Left ventricle myocardium inferior (tissue), 1 donor: ENCODE measurements at regions of chr7 and their contacts with region 1.

Region 1: DNA sequence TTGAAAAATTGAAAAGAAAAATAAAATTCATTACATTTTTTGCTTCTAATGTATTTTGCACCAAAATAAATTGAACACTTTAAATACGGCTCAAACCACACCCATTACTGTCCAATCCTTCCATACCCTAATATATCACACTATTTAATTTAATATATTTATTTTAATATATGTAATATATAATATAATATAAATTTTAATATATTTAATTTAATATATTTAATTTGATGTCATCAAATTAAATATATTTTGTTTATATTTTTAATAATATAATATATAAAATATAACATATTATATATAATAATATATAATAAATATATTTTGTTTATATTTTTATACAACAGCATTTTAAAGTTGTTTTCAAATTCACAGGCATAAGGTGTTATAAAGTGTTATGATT is 15.7 kb upstream of the POU6F2 start:
- DNase-seq: no peak
- H3K4me3 ChIP-seq: no peak overlapping the region
- H3K27ac ChIP-seq: no peak overlapping the region
- H3K4me1 ChIP-seq: no peaks in the 10 kb centered on the region
- H3K27me3 ChIP-seq: peaks cover 1% of the 10 kb centered on the region
- CTCF ChIP-seq: no peak

Region 2: DNA sequence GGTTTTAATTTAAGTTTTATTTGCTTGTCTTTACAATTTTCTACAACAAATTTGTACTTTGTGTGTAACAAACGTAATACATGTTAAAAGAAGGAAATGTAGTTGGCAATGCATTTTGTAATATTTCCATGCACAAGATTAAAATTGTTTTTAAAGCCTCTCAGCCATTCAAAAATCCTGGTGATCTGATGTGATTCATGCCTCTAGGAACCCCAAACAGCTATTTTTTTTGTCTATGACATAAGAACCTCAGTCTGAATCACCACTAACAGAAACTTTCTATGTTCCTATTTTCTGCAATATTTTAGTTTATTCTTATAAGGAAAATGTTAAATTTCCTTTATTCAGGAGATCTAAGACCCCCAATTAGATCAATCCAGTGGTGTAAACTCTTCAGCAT is 421.1 kb after region 1 on chr7:
- intact Hi-C with region 1: loop called (anchors 10 kb)
- DNase-seq: no peak
- H3K4me3 ChIP-seq: no peak overlapping the region
- H3K27ac ChIP-seq: no peak overlapping the region
- H3K4me1 ChIP-seq: no peaks in the 10 kb centered on the region
- H3K27me3 ChIP-seq: peaks cover 54% of the 10 kb centered on the region
- CTCF ChIP-seq: no peak